Naive thymus-derived CD4-positive, alpha-beta T cell (primary cell): ENCODE measurements at regions of chr11 and their contacts with region 1.

Region 1: DNA sequence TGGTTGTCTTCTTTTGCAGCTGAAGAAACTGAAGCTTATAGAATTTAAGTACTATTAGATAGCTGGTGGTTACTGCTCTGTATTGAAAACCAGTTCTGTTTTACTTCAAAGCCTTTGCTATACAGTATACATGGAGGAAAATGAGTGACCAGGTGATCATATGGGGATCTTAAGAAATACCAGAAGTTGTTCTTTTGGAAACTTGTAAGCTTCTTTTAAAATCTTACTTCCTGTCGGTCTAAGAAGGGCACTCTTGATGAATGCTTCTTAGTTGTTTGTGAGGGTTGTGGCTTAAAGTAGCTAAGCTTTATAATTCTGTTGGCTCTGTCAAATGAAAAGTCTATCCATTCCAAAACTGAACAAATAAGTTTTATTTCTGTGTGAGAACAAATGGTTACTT is 55.2 kb downstream of the PDE3B start:
- DNase-seq: peak in 2 of 9 donors; percentile 8 to 26
- ATAC-seq: no peak
- H3K4me3 ChIP-seq: no peak overlapping the region
- H3K4me3 Mint-ChIP-seq: peak overlapping the region; percentile 30 to 80 (median 62)
- H3K27ac ChIP-seq: no peak overlapping the region
- H3K27ac Mint-ChIP-seq: peak overlapping the region; percentile 13 to 82 (median 58)
- H3K4me1 ChIP-seq: peaks cover 9 to 30% of the 10 kb centered on the region in 2 donors
- H3K4me1 Mint-ChIP-seq: peaks cover 20 to 74% (median 67%) of the 10 kb centered on the region in 7 donors
- H3K27me3 ChIP-seq: no peaks in the 10 kb centered on the region
- H3K27me3 Mint-ChIP-seq: no peaks in the 10 kb centered on the region

Region 2: DNA sequence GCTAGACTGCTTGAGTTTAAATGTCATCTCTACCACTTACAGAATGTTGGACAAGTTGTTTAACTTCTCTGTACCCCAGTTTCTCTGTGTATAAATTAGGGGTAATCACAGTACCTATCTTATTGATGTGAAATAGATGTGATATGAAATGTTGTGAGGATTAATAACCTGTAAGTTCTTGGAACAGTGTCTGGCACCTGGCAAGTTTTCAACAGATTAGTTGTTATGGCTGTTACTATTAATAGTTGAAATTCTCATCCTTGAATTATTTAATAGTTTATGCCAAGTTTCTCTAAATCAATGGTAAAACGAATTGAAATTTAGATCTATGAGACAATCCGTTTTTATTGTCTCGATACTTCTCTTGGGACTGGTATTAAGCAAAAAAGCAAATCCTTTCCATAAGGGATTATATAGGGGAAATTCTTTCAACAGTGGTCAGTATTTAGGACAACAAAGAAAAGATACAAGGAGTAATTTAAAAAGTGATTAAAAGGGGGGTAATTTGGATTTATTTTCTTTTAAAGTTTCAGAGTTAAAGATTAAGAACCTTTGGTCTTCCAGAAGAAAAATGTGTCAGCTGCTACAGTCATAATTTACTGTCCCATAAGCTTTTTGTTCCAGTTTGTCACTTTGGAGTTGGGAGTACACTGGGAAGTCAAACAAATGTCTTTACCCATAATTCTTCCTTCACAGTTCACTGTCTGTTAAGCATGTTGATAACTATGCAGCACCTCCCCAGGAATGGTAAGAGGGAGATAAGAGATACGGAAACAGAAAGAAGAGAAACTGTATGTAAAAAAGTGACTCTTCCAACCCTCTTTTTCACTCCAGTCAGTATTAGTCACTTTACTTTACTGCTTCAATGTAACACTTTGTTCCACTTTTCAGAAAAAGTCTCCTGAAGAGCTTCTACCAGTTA is 42.0 kb before region 1 on chr11:
- CTCF ChIA-PET with region 1: no interaction called
- POLR2A ChIA-PET with region 1: interaction called, 3 read pairs
- intact Hi-C with region 1: loop called in 1 of 2 experiments (anchors 5 kb)
- DNase-seq: no peak
- ATAC-seq: no peak
- H3K4me3 ChIP-seq: no peak overlapping the region
- H3K4me3 Mint-ChIP-seq: peak overlapping the region in 1 of 10 donors; percentile 1
- H3K27ac ChIP-seq: no peak overlapping the region
- H3K27ac Mint-ChIP-seq: peak overlapping the region in 5 of 9 donors; percentile 1 to 39 (median 8)
- H3K4me1 ChIP-seq: peaks cover 0 to 22% of the 10 kb centered on the region in 2 donors
- H3K4me1 Mint-ChIP-seq: peaks cover 32 to 84% (median 71%) of the 10 kb centered on the region in 7 donors
- H3K27me3 ChIP-seq: no peaks in the 10 kb centered on the region
- H3K27me3 Mint-ChIP-seq: no peaks in the 10 kb centered on the region

Region 3: DNA sequence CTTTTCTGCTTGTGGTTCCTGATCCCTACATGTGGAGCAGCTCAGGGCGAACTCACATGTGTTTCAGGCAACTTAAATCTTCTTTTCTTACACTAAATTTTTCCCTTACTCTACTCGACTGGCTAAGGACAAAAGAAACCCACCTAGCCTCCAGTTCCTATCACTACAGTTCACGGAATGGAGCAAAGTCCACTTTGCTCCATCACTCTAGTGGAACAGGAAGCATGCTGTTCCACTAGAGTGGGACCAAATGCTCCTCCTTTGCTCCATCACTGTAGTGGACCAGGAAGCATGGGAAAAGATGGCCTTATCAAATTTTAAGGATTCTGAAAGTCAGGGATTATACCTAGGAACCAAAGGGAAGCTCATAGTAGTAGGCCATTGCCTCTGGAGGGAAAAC is 19.1 kb before region 1 on chr11:
- CTCF ChIA-PET with region 1: no interaction called
- POLR2A ChIA-PET with region 1: interaction called, 3 read pairs
- intact Hi-C with region 1: loop called in 1 of 2 experiments (anchors 2 kb)
- DNase-seq: no peak
- ATAC-seq: no peak
- H3K4me3 ChIP-seq: no peak overlapping the region
- H3K4me3 Mint-ChIP-seq: peak overlapping the region in 1 of 10 donors; percentile 27
- H3K27ac ChIP-seq: no peak overlapping the region
- H3K27ac Mint-ChIP-seq: peak overlapping the region in 3 of 9 donors; percentile 2 to 69 (median 53)
- H3K4me1 ChIP-seq: peaks cover 0 to 11% of the 10 kb centered on the region in 2 donors
- H3K4me1 Mint-ChIP-seq: peaks cover 13 to 95% (median 73%) of the 10 kb centered on the region in 7 donors
- H3K27me3 ChIP-seq: no peaks in the 10 kb centered on the region
- H3K27me3 Mint-ChIP-seq: no peaks in the 10 kb centered on the region

Region 4: GRCh38 chr11:14687943-14688627 is 10.7 kb before region 1 on chr11:
- CTCF ChIA-PET with region 1: interaction called, 3 read pairs
- POLR2A ChIA-PET with region 1: interaction called, 3 read pairs
- intact Hi-C with region 1: loop called in 1 of 2 experiments (anchors 2 kb)
- DNase-seq: no peak
- ATAC-seq: peak; percentile 36
- H3K4me3 ChIP-seq: no peak overlapping the region
- H3K4me3 Mint-ChIP-seq: peak overlapping the region in 2 of 10 donors; percentile 13 to 26
- H3K27ac ChIP-seq: no peak overlapping the region
- H3K27ac Mint-ChIP-seq: peak overlapping the region in 5 of 9 donors; percentile 55 to 78 (median 68)
- H3K4me1 ChIP-seq: peaks cover 0 to 16% of the 10 kb centered on the region in 2 donors
- H3K4me1 Mint-ChIP-seq: peaks cover 32 to 72% (median 67%) of the 10 kb centered on the region in 7 donors
- H3K27me3 ChIP-seq: no peaks in the 10 kb centered on the region
- H3K27me3 Mint-ChIP-seq: no peaks in the 10 kb centered on the region

Region 5: DNA sequence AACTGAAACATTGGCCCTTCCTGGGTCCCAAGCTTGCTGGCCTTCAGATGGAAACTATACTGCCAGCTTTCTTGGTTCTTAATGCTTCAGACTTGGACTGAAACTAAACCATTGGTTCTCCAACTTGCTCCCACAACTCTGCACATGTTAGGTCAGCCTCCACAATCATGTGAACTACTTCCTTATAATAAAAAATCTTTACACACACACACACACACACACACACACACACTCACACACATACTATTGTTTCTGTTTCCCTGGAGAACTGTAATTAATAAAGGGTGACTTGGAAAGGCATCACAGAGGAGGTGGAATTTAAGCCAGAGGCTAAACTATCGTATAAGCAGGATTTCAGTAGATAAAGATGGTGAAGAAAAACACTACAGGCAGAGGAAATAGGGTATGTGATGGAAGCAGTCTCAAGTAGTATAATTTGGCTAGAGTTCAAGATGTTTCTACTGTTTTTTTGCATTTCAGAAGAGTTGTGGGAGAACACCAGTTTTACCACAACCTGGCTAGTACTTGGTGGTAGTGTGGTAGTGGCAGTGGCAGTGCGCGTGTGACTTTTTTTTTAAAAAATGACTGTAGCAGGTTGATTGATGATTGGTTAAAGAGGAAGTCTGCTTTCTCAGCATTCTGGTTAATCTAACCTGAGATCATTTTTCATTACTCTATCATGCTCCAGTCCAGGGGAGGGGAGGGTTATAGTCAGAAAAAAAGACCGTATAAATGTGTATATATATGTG is 14.9 kb after region 1 on chr11:
- CTCF ChIA-PET with region 1: no interaction called
- POLR2A ChIA-PET with region 1: interaction called, 5 read pairs
- intact Hi-C with region 1: loop called in 1 of 2 experiments (anchors 1 kb)
- DNase-seq: peak in 7 of 9 donors; percentile 56 to 82 (median 74)
- ATAC-seq: peak; percentile 91
- H3K4me3 ChIP-seq: peak overlapping the region; percentile 22
- H3K4me3 Mint-ChIP-seq: peak overlapping the region; percentile 60 to 85 (median 70)
- H3K27ac ChIP-seq: peak overlapping the region; percentile 1
- H3K27ac Mint-ChIP-seq: peak overlapping the region; percentile 10 to 95 (median 83)
- H3K4me1 ChIP-seq: peaks cover 16 to 20% of the 10 kb centered on the region in 2 donors
- H3K4me1 Mint-ChIP-seq: peaks cover 19 to 60% (median 48%) of the 10 kb centered on the region in 7 donors
- H3K27me3 ChIP-seq: no peaks in the 10 kb centered on the region
- H3K27me3 Mint-ChIP-seq: no peaks in the 10 kb centered on the region